GM18951 (cell line): ENCODE measurements at regions of chr14 and their contacts with region 1.

Region 1: DNA sequence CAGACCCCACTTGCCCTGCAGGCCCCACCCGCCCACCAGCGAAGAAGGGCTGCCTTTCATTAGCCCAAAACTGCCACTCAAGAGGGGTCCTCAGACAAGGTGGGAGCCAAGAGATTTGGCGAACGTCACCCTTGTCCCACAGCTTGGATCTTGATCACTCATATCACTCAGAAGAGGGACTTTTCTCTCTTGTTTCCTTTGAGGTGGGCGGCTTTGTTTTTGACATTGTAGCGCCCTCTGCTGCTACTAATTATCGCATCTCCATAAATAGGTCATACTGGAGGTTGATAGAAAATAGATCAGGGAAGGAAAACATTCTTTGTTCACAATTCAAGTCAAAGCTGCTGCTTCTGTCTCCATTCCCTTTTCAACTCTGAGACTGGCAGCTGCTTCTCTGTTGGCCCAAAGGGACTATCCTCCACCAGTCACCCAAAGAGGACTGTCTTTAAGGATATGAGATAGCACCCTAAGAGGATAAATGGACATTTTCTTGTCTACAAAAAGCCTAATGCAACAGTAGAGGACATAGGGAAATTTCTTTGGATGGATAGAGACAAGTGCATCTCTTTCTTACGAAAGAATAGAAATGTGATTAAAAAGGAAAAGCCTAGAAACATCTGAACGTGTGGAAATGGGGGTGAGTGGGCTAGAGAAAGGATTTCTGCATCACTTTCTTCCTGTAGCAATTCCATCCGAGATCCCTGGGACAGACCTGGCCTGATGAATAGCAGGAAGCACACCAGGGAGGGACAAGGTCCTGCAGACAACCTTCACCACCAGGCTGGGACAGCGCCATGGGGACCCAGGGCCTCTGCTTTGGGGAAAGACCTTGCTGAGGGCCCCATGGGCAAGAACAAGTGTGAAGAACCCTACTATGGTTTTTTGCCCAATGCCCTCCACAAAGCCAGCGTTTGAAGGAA is 115.8 kb downstream of the DAD1 start:
- POLR2A ChIP-seq: no peak

Region 2: DNA sequence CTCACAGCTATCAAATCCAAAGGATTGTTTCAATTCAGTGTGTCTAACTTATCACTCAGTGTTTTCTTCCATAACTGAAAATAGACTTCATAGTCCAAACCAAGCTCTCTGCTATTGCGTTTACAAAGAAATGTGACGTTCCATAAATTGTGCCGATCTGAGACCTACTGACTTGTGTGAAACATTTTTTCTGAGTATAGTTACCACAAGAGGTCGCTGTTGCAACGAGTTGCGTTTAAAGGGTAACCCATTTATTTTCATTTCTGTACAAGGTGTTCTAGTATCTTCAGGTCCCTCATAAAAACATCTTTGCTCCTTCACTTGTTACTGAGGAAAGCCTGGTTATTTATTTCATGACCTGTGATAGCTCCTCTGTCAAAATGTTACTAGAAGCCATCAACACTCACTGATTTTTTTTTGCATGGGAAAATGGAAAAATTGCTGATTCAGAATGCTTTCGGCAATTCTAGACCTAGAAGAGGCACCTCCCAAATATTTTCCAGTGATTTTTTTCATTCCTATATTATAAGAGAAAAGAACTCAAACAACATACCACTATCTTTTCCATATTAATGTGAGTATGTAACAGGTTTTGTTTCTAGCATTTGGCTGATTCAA is 738.6 kb before region 1 on chr14:
- in situ Hi-C with region 1: no loop called
- POLR2A ChIP-seq: no peak

Region 3: GRCh38 chr14:22519877-22520685 is 46.9 kb after region 1 on chr14:
- in situ Hi-C with region 1: loop called (anchors 5 kb)
- POLR2A ChIP-seq: no peak